WTC11 (cell line): ENCODE measurements at regions of chr1 and their contacts with region 1.

Region 1: DNA sequence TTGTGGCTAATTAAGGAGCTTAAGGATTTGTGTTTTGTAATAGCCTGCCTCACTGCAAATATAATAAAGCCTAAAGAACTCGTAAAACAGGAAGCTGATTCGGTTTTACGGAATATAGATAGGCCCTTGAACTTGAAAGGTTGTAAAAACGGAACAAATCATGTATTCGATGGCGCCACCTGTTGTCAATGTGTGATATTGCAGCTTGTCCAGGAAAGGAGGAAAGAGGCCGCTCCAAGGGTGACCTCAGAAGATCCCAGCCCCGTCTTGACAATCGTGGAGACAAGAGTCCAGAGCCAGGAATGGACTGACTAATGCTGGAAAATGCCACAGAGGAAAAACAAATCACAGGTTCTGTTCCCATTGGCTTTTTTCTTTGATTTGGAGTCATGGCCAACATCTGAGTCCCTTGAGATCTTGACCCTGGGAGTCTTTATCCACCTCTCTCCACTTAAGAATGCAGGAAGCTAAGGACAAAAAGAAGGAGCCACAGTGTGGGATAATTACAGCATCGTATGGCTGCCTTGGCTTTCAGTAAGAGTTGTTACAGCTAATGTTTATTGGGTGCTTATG is 7.0 kb upstream of the IGSF21 start:
- DNase-seq: peak; percentile 77
- ATAC-seq: peak; percentile 69
- H3K4me3 Mint-ChIP-seq: no peak overlapping the region
- H3K27ac Mint-ChIP-seq: no peak overlapping the region
- H3K4me1 Mint-ChIP-seq: peaks cover 14% of the 10 kb centered on the region
- H3K27me3 Mint-ChIP-seq: peaks cover 82% of the 10 kb centered on the region
- CTCF ChIP-seq: peak; percentile 71

Region 2: DNA sequence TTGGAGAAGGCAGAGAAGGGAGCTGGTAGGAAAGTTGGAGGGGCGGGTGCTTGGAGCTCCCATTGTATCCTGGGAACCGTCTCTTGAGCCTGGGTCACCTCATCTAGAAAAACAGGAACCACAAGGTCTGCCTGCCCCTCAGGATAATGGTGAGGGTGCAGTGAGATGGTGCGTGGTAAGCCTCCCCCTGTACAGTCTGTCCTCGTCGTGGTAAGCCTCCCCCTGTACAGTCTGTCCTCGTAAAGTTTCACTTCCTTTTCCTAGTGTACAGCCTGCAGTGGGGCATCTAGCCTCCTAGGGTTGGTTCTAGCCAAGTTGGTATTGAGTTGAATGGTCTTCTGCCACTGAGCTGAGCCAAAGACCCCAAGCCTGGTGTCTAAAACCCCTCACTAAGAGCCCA is 59.5 kb before region 1 on chr1:
- CTCF ChIA-PET with region 1: interaction called, 10 read pairs
- POLR2A ChIA-PET with region 1: no interaction called
- DNase-seq: no peak
- ATAC-seq: no peak
- H3K4me3 Mint-ChIP-seq: no peak overlapping the region
- H3K27ac Mint-ChIP-seq: no peak overlapping the region
- H3K4me1 Mint-ChIP-seq: peaks cover 12% of the 10 kb centered on the region
- H3K27me3 Mint-ChIP-seq: peaks cover 26% of the 10 kb centered on the region
- CTCF ChIP-seq: no peak